Activated CD8-positive, alpha-beta T cell treated with anti-CD3 and anti-CD28 coated beads, Interleukin-2, amount 10 ng/mL, durations not matched to agents 7 days and 5 days (primary cell): ENCODE measurements at regions of chr10 and their contacts with region 1.

Region 1: GRCh38 chr10:61903221-61903927 is 1.9 kb downstream of the ARID5B start:
- DNase-seq: peak; percentile 79
- ATAC-seq: peak; percentile 67
- H3K4me3 Mint-ChIP-seq: peak overlapping the region; percentile 94
- H3K27ac Mint-ChIP-seq: peak overlapping the region; percentile 97
- H3K4me1 Mint-ChIP-seq: peaks cover 36% of the 10 kb centered on the region
- H3K27me3 Mint-ChIP-seq: no peaks in the 10 kb centered on the region

Region 2: DNA sequence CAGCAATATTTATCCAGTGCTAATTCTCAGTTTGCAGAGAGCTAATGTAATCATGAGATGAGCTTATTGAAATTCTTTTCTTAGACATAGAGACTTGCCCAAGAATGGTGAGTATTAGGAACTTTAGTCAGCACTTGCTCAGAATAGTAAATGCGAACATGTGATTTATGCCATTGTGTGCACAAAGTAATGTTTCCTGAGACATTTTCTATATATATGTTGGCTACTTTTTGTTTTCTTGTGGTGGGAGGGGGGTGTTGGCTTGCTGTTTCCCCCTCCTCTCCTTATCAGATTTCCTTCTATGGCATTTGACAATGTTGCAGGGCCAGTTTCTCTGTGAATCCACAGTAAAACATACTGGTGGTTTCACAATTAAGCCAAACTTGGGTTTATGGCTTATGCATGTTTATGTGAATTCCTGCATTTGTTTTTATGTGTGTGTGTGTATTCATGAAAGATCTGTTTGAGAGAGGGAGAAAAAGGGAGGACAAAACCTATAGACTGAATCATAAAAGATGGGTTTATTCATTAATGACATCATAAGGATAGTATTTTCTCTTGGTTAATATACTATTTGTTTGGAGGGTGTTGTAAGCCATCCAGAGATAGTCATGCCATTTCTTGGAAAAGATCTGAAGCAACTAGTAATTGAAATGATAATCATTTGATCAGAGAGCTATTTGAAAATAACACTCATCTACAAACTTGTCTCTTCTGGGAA is 34.4 kb after region 1 on chr10:
- CTCF ChIA-PET with region 1: interaction called, 29 read pairs
- POLR2A ChIA-PET with region 1: interaction called, 53 read pairs
- DNase-seq: no peak
- ATAC-seq: no peak
- H3K4me3 Mint-ChIP-seq: no peak overlapping the region
- H3K27ac Mint-ChIP-seq: peak overlapping the region; percentile 72
- H3K4me1 Mint-ChIP-seq: peaks cover 80% of the 10 kb centered on the region
- H3K27me3 Mint-ChIP-seq: no peaks in the 10 kb centered on the region

Region 3: GRCh38 chr10:61961278-61961677 is 57.9 kb after region 1 on chr10:
- CTCF ChIA-PET with region 1: interaction called, 22 read pairs
- POLR2A ChIA-PET with region 1: interaction called, 47 read pairs
- DNase-seq: peak; percentile 59
- ATAC-seq: peak; percentile 89
- H3K4me3 Mint-ChIP-seq: peak overlapping the region; percentile 42
- H3K27ac Mint-ChIP-seq: peak overlapping the region; percentile 82
- H3K4me1 Mint-ChIP-seq: peaks cover 68% of the 10 kb centered on the region
- H3K27me3 Mint-ChIP-seq: no peaks in the 10 kb centered on the region

Region 4: DNA sequence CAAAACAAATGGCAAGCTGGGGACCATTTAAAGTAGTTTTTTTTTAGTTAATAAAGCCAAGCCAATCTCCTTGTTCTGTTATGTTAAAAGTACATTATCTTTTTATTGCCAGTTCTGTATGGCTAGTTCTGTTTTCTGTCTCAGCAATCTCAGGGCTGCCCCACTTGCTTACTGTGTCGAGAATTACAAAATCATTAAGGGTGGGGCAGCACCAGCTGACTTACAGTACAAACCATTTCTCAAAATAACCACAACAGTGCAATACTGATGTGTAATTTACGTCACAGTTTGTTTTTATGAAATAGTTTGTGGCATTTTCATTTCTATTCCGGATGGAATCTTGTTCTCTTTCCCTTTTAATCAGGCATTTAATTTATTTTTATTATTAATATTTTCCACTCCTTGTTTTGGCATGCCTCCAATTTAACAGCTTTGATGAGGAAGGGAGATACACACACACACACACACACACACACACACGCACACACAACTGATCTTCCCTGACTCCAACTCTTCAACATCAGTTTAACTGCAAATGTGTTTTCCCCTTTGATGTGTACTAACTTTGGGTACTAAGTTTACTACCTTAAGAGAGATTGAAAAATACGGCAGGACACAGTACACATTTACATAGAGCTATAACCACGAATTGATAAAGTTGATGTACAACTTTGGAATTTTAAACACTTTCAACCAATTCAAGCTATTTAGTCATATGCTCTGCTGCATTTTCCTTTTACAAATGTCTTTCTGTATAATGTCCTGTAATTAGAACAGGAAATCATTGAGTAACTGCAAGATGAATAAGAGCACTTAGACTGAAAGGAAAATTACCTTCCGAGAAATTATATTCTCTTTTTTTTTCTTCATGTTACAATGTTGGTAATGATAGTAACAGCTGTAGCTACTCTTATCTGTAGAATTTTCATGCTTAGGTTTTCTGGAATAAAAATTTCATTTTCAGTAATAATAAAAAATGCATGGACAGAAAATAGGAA is 89.6 kb after region 1 on chr10:
- CTCF ChIA-PET with region 1: interaction called, 20 read pairs
- POLR2A ChIA-PET with region 1: interaction called, 58 read pairs
- DNase-seq: peak; percentile 49
- ATAC-seq: peak; percentile 49
- H3K4me3 Mint-ChIP-seq: peak overlapping the region; percentile 50
- H3K27ac Mint-ChIP-seq: peak overlapping the region; percentile 75
- H3K4me1 Mint-ChIP-seq: peaks cover 44% of the 10 kb centered on the region
- H3K27me3 Mint-ChIP-seq: no peaks in the 10 kb centered on the region

Region 5: GRCh38 chr10:62082729-62083411 is 179.5 kb after region 1 on chr10:
- CTCF ChIA-PET with region 1: no interaction called
- POLR2A ChIA-PET with region 1: interaction called, 12 read pairs
- DNase-seq: peak; percentile 74
- ATAC-seq: peak; percentile 78
- H3K4me3 Mint-ChIP-seq: peak overlapping the region; percentile 66
- H3K27ac Mint-ChIP-seq: peak overlapping the region; percentile 92
- H3K4me1 Mint-ChIP-seq: peaks cover 68% of the 10 kb centered on the region
- H3K27me3 Mint-ChIP-seq: no peaks in the 10 kb centered on the region